Activated CD8-positive, alpha-beta T cell treated with anti-CD3 and anti-CD28 coated beads for 36 hours (primary cell): ENCODE measurements at regions of chr7 and their contacts with region 1.

Region 1: DNA sequence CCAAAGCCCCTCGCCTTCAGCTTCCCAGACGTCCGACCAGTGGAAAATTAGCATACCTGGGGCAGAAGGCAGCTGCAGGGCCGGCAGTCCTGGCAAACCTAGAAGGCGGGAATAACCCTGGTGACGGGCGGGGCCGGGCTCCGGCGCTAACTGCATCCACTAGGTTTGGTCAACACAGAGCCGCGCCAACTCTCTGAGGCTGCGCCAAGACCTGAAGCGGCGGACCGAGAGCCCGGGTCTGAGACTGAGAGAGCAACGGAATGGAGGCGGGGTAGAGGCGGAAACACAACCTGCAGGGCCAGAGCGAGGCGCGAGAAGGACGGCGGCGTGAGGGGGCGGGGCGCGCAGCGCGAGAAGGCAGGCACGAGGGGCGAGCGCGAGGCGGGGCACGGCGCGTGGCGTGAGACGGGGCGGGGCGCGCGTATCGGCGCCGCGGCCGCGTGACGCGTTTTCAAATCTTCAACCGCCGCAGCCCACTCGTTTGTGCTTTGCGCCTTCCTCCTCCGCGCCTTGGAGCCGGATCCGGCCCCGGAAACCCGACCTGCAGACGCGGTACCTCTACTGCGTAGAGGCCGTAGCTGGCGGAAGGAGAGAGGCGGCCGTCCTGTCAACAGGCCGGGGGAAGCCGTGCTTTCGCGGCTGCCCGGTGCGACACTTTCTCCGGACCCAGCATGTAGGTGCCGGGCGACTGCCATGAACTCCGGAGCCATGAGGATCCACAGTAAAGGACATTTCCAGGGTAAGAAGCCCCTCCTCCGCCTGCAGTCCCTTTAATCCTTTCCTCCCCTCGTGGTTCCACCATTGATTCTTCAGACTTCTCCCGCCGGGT is at the starts of genes DBF4 and SLC25A40:
- DNase-seq: peak; percentile 96
- ATAC-seq: peak; percentile 94
- H3K4me3 Mint-ChIP-seq: peak within 1 kb of the TSS; percentile 78
- H3K27ac Mint-ChIP-seq: peak within 1 kb of the TSS; percentile 96
- H3K4me1 Mint-ChIP-seq: peaks cover 51% of the 10 kb centered on the region
- H3K27me3 Mint-ChIP-seq: no peaks in the 10 kb centered on the region
- CTCF ChIP-seq: no peak
- total RNA-seq, gene DBF4: 77.6 to 78.7 TPM
- total RNA-seq, gene SLC25A40: 38.9 to 47.4 TPM

Region 2: GRCh38 chr7:87920578-87920977 is 44.3 kb after region 1 on chr7:
- CTCF ChIA-PET with region 1: no interaction called
- POLR2A ChIA-PET with region 1: no interaction called
- intact Hi-C with region 1: no loop called
- DNase-seq: no peak
- ATAC-seq: no peak
- H3K4me3 Mint-ChIP-seq: no peak overlapping the region
- H3K27ac Mint-ChIP-seq: no peak overlapping the region
- H3K4me1 Mint-ChIP-seq: no peaks in the 10 kb centered on the region
- H3K27me3 Mint-ChIP-seq: no peaks in the 10 kb centered on the region
- CTCF ChIP-seq: no peak

Region 3: DNA sequence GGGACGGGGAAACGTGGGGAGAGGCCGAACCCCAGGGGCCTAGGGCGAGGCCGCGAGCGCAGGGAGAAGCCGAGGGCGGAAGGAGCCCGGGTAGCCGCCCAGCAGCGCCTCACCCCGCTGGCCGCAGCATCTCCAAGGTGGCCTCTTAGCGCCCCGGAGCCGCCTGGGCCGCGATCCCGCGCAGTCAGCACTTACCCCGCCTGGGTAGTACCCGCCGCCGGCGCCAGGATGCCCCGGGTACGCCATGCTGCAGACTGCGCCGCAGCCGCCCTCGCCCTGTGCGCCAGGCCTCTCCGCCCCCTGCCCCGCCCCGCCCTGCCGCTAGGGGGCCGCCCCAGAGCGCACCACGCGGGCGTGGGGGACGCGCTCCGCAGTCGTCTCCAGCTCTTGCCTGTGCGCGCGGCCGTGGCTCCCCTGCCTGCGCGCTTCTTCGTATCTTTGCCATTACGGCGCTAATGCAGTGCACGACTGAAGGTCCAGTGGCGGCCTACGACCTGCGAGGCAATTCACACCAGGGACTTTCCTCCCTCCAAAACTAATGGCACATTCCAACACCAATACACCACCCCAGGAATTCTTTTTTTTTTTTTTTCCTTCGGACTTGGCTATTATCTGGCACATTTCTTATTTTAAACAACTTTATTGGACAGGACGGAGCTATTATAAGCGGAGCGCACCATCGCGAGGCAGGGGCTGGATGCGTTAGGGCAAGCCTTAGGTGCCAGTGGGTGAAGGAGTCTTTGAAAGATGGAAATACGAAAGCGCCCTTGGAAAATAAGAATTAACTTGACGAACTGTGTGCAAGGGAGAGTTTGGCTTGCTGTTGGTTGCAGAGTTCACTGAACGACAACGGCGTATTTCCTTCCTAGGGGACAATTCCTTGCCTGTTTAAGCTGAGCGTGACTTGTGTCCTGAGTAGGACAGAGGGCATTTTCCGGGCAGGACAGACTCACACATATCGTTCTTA is 343.8 kb after region 1 on chr7 and contains the start of gene SRI:
- CTCF ChIA-PET with region 1: no interaction called
- POLR2A ChIA-PET with region 1: no interaction called
- intact Hi-C with region 1: loop called (anchors 5 kb)
- DNase-seq: peak; percentile 91
- ATAC-seq: peak; percentile 96
- H3K4me3 Mint-ChIP-seq: peak within 1 kb of the TSS; percentile 86
- H3K27ac Mint-ChIP-seq: peak within 1 kb of the TSS; percentile 93
- H3K4me1 Mint-ChIP-seq: peaks cover 21% of the 10 kb centered on the region
- H3K27me3 Mint-ChIP-seq: no peaks in the 10 kb centered on the region
- CTCF ChIP-seq: peak; percentile 84
- total RNA-seq, gene SRI: 169 TPM